Stomach (tissue), 19 donors: ENCODE measurements at regions of chr1 and their contacts with region 1.

Region 1: DNA sequence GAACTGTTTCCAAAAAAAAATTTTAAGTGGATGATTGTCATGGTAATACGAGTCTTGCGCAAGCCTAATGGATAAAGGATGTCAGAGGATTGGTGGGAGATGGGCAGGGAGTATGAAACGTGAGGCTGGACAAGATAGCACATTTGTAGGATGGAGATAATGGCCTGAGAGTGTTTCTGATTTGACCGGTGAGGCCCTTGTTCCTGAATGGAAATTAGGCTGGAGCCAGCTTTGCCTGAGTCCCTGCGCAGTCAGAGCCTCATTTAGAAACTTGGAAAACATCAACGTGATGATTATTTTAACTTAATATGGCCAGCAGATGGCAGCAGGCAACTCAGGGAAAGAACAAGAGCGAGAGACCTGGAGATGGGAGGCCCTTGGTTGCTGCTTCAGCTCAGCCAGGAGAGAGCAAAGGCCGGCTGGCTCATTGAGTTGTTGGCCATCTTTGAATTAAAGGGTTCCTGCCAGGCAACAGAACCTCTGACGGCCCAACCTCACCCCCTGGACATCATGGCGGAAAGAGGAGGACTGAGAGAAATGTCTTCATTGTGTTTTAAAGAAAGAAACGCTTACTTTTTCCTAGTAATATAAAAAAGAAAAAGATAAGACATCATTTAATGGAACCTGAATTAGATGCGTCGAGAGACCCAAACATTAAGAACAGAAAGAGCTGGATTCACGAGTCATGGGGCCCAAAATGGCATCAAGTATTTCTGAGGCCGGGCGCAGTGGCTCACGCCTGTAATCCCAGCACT is 80.3 kb downstream of the SELENOF start:
- DNase-seq: peak; percentile 78 to 93
- H3K4me3 ChIP-seq: no peak overlapping the region
- H3K27ac ChIP-seq: no peak overlapping the region
- H3K4me1 ChIP-seq: peaks cover 0 to 6% (median 3%) of the 10 kb centered on the region in 4 donors
- H3K27me3 ChIP-seq: no peaks in the 10 kb centered on the region
- CTCF ChIP-seq: peak in 4 of 7 experiments; percentile 42 to 71 (median 55)
- EP300 ChIP-seq: no peak
- POLR2A ChIP-seq: no peak

Region 2: GRCh38 chr1:86546787-86547221 is 286.8 kb before region 1 on chr1 and contains the start of gene CLCA4:
- intact Hi-C with region 1: no loop called
- DNase-seq: no peak
- H3K4me3 ChIP-seq: no peak within 1 kb of the TSS
- H3K27ac ChIP-seq: no peak within 1 kb of the TSS
- H3K4me1 ChIP-seq: no peaks in the 10 kb centered on the region
- H3K27me3 ChIP-seq: no peaks in the 10 kb centered on the region
- CTCF ChIP-seq: no peak
- EP300 ChIP-seq: no peak
- POLR2A ChIP-seq: no peak
- total RNA-seq, gene CLCA4: 1.1 TPM in 1 of 5 donors, not detected in the others

Region 3: DNA sequence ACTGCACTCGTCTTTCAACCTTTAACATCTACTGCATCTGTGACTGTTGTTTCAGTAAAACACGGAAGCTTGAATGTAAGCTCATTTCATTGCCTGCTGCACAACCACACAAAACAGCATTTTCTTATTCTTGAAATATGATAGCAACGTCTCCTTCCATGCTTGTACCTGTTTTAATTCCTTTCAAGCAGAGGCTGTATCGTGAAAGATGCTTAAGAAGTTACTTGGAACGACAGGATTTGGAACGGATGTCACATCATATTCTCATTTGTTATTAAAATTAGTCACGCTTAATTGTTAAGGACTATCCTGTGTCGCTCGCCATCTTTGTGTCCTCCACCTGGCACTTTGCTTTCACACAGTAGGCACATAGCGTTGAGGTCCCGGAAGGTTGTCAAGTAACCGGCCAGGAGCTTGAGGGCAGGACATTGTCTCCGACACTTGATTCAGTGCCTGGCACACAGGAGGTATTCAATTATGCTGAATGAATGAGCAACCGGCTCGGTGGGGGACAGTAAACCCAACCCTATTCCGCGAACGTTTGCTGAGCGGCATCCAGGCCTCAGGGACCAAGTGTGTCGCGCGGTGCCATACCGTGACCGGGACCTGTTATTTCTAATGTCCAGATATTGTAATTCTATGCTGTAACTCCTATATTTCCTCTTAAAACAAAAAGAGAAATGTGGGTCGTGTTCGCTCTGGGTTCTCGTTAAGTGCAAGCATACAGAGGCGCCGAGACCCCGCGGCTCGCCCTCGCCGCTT is 129.8 kb before region 1 on chr1:
- intact Hi-C with region 1: no loop called
- DNase-seq: no peak
- H3K4me3 ChIP-seq: peak overlapping the region; percentile 74 to 82 (median 78)
- H3K27ac ChIP-seq: peak overlapping the region; percentile 91 to 99 (median 96)
- H3K4me1 ChIP-seq: peaks cover 21 to 45% (median 38%) of the 10 kb centered on the region in 4 donors
- H3K27me3 ChIP-seq: no peaks in the 10 kb centered on the region
- CTCF ChIP-seq: no peak
- EP300 ChIP-seq: no peak
- POLR2A ChIP-seq: no peak

Region 4: DNA sequence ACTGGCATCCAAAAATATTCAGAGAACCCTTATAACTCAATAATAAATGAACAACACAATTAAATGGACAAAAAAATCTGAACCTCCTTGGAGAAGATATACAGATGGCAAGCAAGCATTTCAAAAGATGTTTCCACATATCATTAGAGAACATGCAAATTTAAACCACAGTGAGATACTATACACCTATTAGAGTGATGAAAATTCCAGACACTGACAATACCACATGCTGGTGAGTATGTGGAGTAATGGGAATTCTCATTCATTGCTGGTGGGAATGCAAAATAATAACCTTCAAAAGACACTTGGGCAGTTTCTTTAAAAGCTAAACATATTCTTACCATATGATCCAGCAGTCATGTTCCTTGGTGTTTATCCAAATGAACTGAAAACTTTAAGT is 126.9 kb after region 1 on chr1:
- intact Hi-C with region 1: loop called (anchors 5 kb)
- DNase-seq: no peak
- H3K4me3 ChIP-seq: no peak overlapping the region
- H3K27ac ChIP-seq: no peak overlapping the region
- H3K4me1 ChIP-seq: peaks cover 0 to 7% (median 0%) of the 10 kb centered on the region in 4 donors
- H3K27me3 ChIP-seq: no peaks in the 10 kb centered on the region
- CTCF ChIP-seq: no peak
- EP300 ChIP-seq: no peak
- POLR2A ChIP-seq: no peak

Region 5: DNA sequence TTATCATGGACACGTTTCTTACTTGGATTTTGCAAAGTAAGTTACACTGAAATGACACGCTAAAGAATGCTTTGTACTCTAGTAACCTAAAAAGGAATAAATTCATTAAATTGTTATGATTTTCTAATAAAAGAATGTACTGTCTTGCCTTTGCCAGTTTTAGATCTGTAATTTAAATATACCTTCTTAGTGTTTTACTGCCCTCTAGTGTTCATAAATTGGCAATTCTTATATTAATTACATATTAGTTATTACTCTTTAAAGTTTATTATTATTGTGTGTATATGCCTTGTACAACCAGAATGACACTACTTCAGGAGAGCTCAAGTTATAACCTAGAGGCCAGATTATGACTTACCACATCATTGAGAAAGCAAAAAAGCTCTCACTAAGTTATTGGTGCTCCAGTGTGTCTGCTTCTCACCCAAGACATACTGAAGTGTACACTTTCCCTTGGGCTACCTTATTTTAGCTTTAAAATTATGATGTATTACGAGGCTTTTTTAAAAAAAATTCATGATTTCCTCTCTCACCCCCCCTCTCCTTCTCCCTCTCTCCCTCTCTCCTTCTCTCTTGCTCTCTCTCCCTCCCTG is 250.7 kb after region 1 on chr1:
- intact Hi-C with region 1: loop called (anchors 5 kb)
- DNase-seq: peak in 1 of 2 donors; percentile 50
- H3K4me3 ChIP-seq: no peak overlapping the region
- H3K27ac ChIP-seq: no peak overlapping the region
- H3K4me1 ChIP-seq: no peaks in the 10 kb centered on the region
- H3K27me3 ChIP-seq: no peaks in the 10 kb centered on the region
- CTCF ChIP-seq: peak in 3 of 7 experiments; percentile 25 to 68 (median 56)
- EP300 ChIP-seq: no peak
- POLR2A ChIP-seq: no peak